RWPE1 (cell line): ENCODE measurements at regions of chr14 and their contacts with region 1.

Region 1: DNA sequence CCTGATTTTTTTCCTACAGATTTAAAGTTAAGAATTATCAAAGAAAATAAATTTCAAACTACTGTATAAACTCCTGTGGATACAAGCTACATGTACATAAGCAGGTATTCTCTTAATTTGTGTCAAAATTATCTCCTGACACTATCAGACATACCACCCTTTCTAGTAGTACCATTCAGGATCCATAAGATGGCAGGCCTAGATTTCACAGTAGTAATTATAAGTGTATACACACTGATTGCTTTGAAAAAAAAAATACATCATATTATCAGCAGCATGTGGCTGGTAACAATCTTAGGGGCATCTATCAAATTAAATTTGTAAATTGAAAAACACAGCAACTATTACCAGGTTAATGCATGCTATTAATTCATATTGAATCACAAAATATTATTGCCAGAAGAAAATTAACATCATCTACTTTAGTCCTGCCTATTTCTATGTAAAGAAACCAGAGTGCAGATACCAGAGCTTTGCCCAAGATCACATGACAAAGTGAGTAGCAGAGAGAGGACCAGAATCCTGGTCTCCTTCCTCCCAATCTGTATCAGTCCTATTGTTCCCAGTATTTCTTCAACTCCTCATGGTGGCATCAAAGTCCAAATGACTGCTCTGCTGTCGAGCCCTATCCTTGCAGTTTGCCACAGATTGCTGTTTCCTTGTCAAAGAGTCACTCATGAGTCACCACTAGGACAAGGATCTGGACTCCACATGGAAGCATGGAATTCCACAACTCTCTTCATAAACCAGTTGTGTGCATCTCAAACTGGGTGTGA is 27.7 kb upstream of the CALM1 start:
- DNase-seq: no peak
- H3K27ac ChIP-seq: no peak overlapping the region
- CTCF ChIP-seq: 0 out of 2 replicates have a peak, but pooled peaks have one; percentile 14

Region 2: GRCh38 chr14:90697577-90698206 is 328.6 kb after region 1 on chr14:
- CTCF ChIA-PET with region 1: no interaction called
- POLR2A ChIA-PET with region 1: interaction called, 11 read pairs
- DNase-seq: peak; percentile 88
- H3K27ac ChIP-seq: no peak overlapping the region
- CTCF ChIP-seq: peak; percentile 95